Psoas muscle (tissue), 8 donors: ENCODE measurements at regions of chr18 and their contacts with region 1.

Region 1: DNA sequence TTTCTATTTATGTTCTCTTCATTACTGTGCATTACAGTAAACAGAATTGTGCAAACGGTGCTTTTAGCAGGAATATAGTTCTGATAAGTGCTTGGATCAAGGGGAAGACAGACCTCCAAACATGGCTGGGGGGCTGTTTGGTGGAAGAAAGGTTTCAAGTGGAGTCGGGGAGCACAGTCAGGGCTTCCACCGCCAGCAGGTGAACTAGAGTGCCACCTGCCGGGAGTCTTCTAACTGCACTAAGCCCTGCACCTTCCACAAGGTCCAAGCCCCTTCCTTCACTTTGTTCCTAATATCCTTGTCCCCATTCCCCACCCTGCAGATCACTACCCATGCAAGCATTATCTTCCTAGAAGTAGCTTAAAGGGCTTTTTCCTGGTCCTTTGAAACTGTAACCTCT is 11.1 kb downstream of the ONECUT2 start:
- DNase-seq: no peak
- ATAC-seq: peak in 1 of 4 donors; percentile 57
- H3K4me3 ChIP-seq: no peak overlapping the region
- H3K27ac ChIP-seq: no peak overlapping the region
- H3K4me1 ChIP-seq: no peaks in the 10 kb centered on the region
- H3K27me3 ChIP-seq: peaks cover 0 to 64% (median 7%) of the 10 kb centered on the region in 3 donors
- CTCF ChIP-seq: peak; percentile 34

Region 2: GRCh38 chr18:56211473-56211872 is 1234.8 kb before region 1 on chr18:
- intact Hi-C with region 1: no loop called
- DNase-seq: no peak
- ATAC-seq: no peak
- H3K4me3 ChIP-seq: no peak overlapping the region
- H3K27ac ChIP-seq: no peak overlapping the region
- H3K4me1 ChIP-seq: no peaks in the 10 kb centered on the region
- H3K27me3 ChIP-seq: no peaks in the 10 kb centered on the region
- CTCF ChIP-seq: no peak

Region 3: DNA sequence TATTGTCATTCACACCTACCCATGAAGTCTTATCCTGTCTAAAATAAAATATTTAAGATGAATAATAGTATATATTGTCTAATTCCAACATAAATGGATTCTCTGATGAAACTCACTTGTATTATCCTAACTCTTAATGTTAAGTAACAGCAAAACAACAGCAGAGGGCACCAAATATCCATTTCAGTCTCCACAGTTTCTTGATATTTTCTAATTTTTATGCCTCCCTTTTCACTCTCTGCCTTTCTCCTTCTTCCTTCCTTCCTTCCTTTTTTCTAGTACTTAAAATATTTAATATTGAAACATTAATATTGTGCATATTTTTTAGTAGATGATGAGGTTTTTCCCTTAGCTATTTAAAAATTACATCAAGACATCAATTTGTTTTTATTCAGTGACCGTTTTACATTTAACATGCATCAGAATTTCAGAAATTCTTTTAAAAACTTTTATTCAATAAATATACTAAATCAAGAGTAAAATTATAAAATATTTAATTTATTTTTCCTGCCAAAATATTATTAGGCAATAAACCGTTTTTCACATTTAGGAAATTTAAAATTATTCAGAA is 697.5 kb before region 1 on chr18:
- intact Hi-C with region 1: loop called in 1 of 2 experiments (anchors 5 kb)
- DNase-seq: no peak
- ATAC-seq: no peak
- H3K4me3 ChIP-seq: no peak overlapping the region
- H3K27ac ChIP-seq: no peak overlapping the region
- H3K4me1 ChIP-seq: peaks cover 6% of the 10 kb centered on the region
- H3K27me3 ChIP-seq: no peaks in the 10 kb centered on the region
- CTCF ChIP-seq: peak; percentile 66

Region 4: GRCh38 chr18:57516056-57516455 is 69.7 kb after region 1 on chr18:
- intact Hi-C with region 1: no loop called
- DNase-seq: no peak
- ATAC-seq: no peak
- H3K4me3 ChIP-seq: no peak overlapping the region
- H3K27ac ChIP-seq: no peak overlapping the region
- H3K4me1 ChIP-seq: no peaks in the 10 kb centered on the region
- H3K27me3 ChIP-seq: no peaks in the 10 kb centered on the region
- CTCF ChIP-seq: no peak